ENCODE measurements at regions of chr20 and their contacts with region 1.

Region 1: DNA sequence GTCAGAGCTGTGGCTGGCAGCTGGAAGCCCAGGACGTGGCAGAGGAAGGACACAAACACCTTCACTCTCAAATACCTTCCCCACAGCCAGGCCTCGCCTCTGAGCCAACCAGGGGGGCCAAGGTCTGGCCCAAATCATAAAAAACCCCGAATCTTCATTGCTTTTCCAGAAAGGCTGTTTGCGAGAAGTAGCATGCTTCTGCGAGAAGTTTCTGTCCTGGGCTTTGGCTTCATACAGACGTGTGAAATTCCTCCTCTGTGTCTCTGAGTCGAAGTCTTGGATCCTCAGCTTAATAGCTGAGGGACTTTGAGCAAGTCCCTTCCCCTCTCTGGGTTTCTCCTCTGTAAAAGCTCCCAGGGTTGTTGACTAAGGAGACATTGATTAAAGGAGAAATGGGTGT is 63.0 kb downstream of the CHMP4B start:
- DNase-seq: no peak
- ATAC-seq: no peak
- H3K4me3 ChIP-seq: no peak overlapping the region
- H3K27ac ChIP-seq: peak overlapping the region; percentile 2; the same call in 1 of the 2 replicates
- H3K4me1 ChIP-seq: peaks cover 13% of the 10 kb centered on the region; the same call in 1 of the 2 replicates
- H3K27me3 ChIP-seq: no peaks in the 10 kb centered on the region
- CTCF ChIP-seq: no peak

Region 2: DNA sequence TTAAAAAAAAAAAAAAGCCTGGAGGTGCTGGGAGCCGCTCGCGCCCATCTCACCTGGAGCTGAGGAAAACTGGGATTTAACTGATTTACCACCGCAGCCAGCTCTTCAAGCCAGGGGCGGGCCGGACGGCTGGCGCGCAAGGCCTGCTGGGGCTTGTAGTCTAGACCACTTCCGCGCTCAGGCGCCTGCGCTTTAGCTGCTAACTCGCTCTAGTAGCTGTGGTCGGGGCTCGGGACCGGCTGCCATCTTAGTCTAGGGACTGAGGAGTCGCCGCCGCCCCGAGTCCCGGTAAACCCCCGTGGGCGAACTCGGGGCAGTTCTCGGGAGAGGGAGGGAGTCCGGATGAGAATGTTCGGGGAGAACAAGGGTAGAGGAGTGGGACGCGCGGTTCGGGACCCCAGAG is 488.9 kb after region 1 on chr20 and contains the start of gene ITCH:
- CTCF ChIA-PET with region 1: no interaction called
- POLR2A ChIA-PET with region 1: interaction called, 13 read pairs
- in situ Hi-C with region 1: no loop called
- intact Hi-C with region 1: no loop called
- DNase-seq: peak; percentile 75
- ATAC-seq: peak; percentile 100
- H3K4me3 ChIP-seq: peak within 1 kb of the TSS; percentile 86 to 89
- H3K27ac ChIP-seq: peak within 1 kb of the TSS; percentile 87
- H3K4me1 ChIP-seq: peaks cover 20% of the 10 kb centered on the region
- H3K27me3 ChIP-seq: no peaks in the 10 kb centered on the region
- CTCF ChIP-seq: no peak
- total RNA-seq, gene ITCH: 63.9 TPM